Esophagus squamous epithelium (tissue), 5 donors: ENCODE measurements at regions of chr4 and their contacts with region 1.

Region 1: GRCh38 chr4:89226665-89227574 is 80.7 kb downstream of the GPRIN3 start:
- DNase-seq: no peak
- H3K4me3 ChIP-seq: peak overlapping the region in 1 of 4 donors; percentile 34
- H3K27ac ChIP-seq: no peak overlapping the region
- H3K4me1 ChIP-seq: peaks cover 0 to 10% (median 0%) of the 10 kb centered on the region in 3 donors
- H3K27me3 ChIP-seq: no peaks in the 10 kb centered on the region
- CTCF ChIP-seq: peak; percentile 42 to 82 (median 72)
- POLR2A ChIP-seq: no peak

Region 2: DNA sequence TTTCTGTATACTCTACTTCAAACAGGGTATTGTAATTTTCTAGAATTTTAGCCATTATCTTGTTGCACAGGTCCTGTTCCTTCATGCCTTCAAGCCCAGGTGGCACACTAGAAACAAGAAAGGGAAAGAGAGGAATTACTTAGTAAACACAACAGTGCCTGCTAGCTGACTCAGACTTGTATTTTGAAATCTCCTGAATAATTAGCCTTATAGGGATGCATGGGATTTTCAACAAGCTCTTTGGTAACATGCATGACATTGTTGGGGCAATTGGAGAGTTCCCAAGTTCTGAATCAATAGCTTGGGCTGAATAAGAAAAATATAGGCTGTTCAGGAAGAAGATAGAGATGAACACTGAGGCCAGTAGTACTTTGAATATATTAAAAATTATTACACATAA is 288.8 kb before region 1 on chr4:
- intact Hi-C with region 1: no loop called
- DNase-seq: no peak
- H3K4me3 ChIP-seq: no peak overlapping the region
- H3K27ac ChIP-seq: no peak overlapping the region
- H3K4me1 ChIP-seq: peaks cover 0 to 8% (median 3%) of the 10 kb centered on the region in 3 donors
- H3K27me3 ChIP-seq: no peaks in the 10 kb centered on the region
- CTCF ChIP-seq: no peak
- POLR2A ChIP-seq: no peak

Region 3: DNA sequence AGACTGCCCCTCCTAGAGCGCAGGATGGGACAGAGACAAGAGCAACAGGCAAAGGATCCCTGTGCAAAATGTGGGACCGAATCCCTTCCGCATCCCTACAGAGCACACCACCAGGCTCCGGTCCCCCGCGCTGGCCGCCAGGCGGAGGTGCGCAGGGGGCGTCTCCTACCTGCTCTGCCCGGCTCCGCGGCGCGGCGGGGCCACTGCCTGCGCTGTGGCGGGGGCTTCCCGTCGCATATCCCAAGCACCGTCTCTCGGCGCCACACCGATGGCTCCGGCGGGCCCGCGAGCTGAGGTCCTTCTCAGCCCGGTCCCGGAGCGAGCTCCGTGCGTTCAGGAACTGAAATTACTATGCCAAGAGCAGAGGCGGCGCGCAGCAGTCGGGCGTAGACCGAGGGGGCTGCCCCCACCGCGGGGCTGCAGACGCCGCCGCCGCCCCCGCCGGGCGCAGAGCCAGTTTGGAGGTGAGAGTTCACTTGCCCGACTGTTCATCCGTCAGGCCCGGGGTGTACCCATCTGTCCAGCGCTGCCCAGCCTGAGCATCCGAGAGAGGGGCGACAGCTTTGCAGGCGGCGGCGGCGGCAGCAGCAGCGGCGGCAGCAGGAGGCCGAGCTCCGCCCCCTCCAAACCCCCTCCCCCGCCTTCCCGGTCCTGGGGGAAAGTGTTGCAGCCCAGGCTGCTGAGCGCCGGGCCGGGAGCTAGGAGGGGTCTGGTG is 80.7 kb after region 1 on chr4 and contains the start of gene GPRIN3:
- intact Hi-C with region 1: no loop called
- DNase-seq: peak; percentile 4
- H3K4me3 ChIP-seq: peak within 1 kb of the TSS; percentile 41 to 71 (median 56)
- H3K27ac ChIP-seq: peak within 1 kb of the TSS; percentile 51 to 79 (median 61)
- H3K4me1 ChIP-seq: peaks cover 6 to 32% (median 9%) of the 10 kb centered on the region in 3 donors
- H3K27me3 ChIP-seq: peaks cover 0 to 23% (median 0%) of the 10 kb centered on the region in 4 donors
- CTCF ChIP-seq: no peak
- POLR2A ChIP-seq: peak in 1 of 4 donors; percentile 38
- total RNA-seq, gene GPRIN3: 0.83 to 4.2 (median 1.9) TPM

Region 4: GRCh38 chr4:89434364-89434988 is 207.6 kb after region 1 on chr4:
- intact Hi-C with region 1: loop called (anchors 5 kb)
- DNase-seq: no peak
- H3K4me3 ChIP-seq: no peak overlapping the region
- H3K27ac ChIP-seq: no peak overlapping the region
- H3K4me1 ChIP-seq: no peaks in the 10 kb centered on the region
- H3K27me3 ChIP-seq: no peaks in the 10 kb centered on the region
- CTCF ChIP-seq: peak; percentile 22 to 69 (median 64)
- POLR2A ChIP-seq: no peak

Region 5: DNA sequence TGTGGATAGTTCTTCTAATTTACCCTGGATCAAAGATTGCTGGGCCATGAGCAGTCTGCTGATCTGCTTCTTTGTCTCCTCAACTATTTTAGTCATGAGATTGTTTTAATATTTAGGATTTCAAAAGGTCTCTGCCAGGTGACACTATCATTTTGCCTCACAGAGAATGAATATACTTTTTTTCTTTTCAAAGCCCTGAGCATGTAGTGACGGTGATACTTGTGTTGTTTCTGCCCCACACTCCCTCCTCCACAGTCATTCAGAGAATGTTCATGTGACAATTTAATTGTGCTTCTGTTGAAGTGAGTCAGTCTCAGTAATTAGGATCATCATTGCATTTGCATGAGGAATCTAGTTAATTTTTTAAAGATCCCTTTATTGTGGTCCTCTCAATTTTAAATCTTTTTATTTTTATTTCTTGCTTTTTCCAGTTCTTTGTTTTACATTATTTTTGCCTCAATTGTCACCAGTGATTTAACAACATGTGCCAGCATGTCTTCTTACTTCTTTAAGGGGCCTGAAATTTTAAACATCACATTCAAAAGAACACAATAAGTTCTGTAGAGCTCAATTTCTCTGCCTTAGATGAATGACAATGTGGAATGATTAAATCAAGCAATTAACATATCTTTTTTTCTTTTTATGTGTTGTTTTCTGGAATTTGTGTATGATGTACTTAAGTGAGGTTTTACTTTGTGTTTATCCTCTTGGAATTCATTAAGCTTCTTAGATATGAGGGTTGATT is 680.0 kb after region 1 on chr4:
- intact Hi-C with region 1: loop called (anchors 10 kb)
- DNase-seq: no peak
- H3K4me3 ChIP-seq: no peak overlapping the region
- H3K27ac ChIP-seq: no peak overlapping the region
- H3K4me1 ChIP-seq: no peaks in the 10 kb centered on the region
- H3K27me3 ChIP-seq: no peaks in the 10 kb centered on the region
- CTCF ChIP-seq: no peak
- POLR2A ChIP-seq: no peak